Ascending aorta (tissue), 2 donors: ENCODE measurements at regions of chr13 and their contacts with region 1.

Region 1: GRCh38 chr13:97109841-97110492 is 112.2 kb upstream of the MBNL2 start:
- DNase-seq: peak; percentile 66 to 96
- H3K4me3 ChIP-seq: peak overlapping the region in 1 of 2 donors; percentile 42
- H3K27ac ChIP-seq: peak overlapping the region; percentile 63 to 69
- H3K4me1 ChIP-seq: peaks cover 8 to 70% of the 10 kb centered on the region in 2 donors
- H3K27me3 ChIP-seq: no peaks in the 10 kb centered on the region
- CTCF ChIP-seq: peak; percentile 95 to 97 (median 96)

Region 2: GRCh38 chr13:96053011-96053703 is 1056.8 kb before region 1 on chr13 and contains the start of gene UGGT2:
- intact Hi-C with region 1: loop called (anchors 10 kb)
- DNase-seq: peak; percentile 77 to 96
- H3K4me3 ChIP-seq: peak within 1 kb of the TSS; percentile 73 to 89
- H3K27ac ChIP-seq: peak within 1 kb of the TSS; percentile 81 to 94
- H3K4me1 ChIP-seq: no peaks in the 10 kb centered on the region
- H3K27me3 ChIP-seq: no peaks in the 10 kb centered on the region
- CTCF ChIP-seq: no peak
- total RNA-seq, gene UGGT2: 26.0 TPM

Region 3: GRCh38 chr13:97275265-97275664 is 165.3 kb after region 1 on chr13:
- intact Hi-C with region 1: loop called (anchors 5 kb)
- DNase-seq: no peak
- H3K4me3 ChIP-seq: no peak overlapping the region
- H3K27ac ChIP-seq: peak overlapping the region; percentile 78 to 84
- H3K4me1 ChIP-seq: peaks cover 23 to 46% of the 10 kb centered on the region in 2 donors
- H3K27me3 ChIP-seq: no peaks in the 10 kb centered on the region
- CTCF ChIP-seq: no peak

Region 4: DNA sequence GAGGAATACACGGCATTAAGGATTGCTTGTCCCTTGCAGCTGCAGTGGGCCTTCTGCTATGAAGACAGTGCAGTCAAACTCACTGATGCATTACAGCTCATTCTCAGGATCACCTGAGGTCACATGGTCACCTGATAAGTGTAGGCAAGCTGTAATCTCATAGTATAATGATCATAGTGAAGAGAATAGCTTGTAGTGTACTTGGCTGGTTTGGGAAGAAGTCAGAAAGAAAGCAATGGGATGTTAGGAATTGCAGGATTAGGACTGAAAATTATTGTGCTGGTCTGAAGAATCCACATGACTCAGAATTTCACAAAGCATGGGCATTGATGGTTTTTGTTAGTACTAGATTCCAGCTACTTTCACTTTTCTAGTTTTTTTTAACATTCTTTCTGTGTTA is 188.8 kb after region 1 on chr13:
- intact Hi-C with region 1: no loop called
- DNase-seq: no peak
- H3K4me3 ChIP-seq: no peak overlapping the region
- H3K27ac ChIP-seq: no peak overlapping the region
- H3K4me1 ChIP-seq: peaks cover 0 to 15% of the 10 kb centered on the region in 2 donors
- H3K27me3 ChIP-seq: no peaks in the 10 kb centered on the region
- CTCF ChIP-seq: no peak

Region 5: GRCh38 chr13:97344265-97345175 is 234.6 kb after region 1 on chr13:
- intact Hi-C with region 1: loop called (anchors 1 kb)
- DNase-seq: no peak
- H3K4me3 ChIP-seq: no peak overlapping the region
- H3K27ac ChIP-seq: no peak overlapping the region
- H3K4me1 ChIP-seq: peaks cover 0 to 8% of the 10 kb centered on the region in 2 donors
- H3K27me3 ChIP-seq: no peaks in the 10 kb centered on the region
- CTCF ChIP-seq: peak; percentile 50 to 76 (median 65)

Region 6: DNA sequence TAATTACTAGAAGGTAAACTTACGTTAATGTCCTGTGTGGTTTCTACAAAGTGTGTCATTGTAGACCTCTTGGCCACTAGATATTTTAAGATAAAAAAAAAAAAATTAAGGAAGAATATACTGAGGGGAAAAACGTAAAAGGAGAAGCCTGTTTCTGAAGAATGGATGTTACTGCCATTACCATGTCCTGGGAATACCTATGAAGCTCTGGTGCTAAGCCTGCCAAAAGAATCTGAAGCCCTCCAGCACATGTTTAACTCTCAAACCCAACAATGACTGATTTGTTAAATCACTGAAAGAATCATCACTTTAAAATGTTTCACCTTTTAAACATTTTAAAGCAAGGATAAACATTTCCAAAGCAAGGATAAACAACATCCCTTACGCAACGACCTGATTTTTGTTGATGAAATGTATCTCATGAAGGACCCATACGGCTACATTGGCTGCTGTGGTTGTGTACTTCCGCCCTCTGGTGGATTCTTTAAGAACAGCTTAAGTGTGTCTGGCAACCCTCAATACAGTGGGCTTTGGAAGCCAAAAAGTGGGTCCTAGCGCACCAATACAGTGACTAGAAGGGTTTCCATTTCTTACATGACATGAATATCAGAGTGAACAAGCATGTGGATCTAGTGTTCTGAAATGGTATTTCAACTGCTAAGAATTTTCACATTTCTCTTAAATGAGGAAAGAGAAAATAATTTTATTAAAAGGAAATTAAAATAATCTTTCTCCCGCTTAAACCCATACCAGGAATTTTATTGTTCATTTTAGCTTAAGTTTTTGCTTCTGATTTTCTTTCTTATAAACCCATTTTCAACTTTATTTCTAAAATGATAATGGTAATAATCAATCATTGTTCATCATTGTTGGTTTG is 249.5 kb after region 1 on chr13:
- intact Hi-C with region 1: loop called (anchors 1 kb)
- DNase-seq: no peak
- H3K4me3 ChIP-seq: no peak overlapping the region
- H3K27ac ChIP-seq: no peak overlapping the region
- H3K4me1 ChIP-seq: peaks cover 0 to 18% of the 10 kb centered on the region in 2 donors
- H3K27me3 ChIP-seq: no peaks in the 10 kb centered on the region
- CTCF ChIP-seq: peak; percentile 70 to 90 (median 85)

Region 7: GRCh38 chr13:97411984-97412383 is 302.0 kb after region 1 on chr13:
- intact Hi-C with region 1: no loop called
- DNase-seq: no peak
- H3K4me3 ChIP-seq: no peak overlapping the region
- H3K27ac ChIP-seq: no peak overlapping the region
- H3K4me1 ChIP-seq: no peaks in the 10 kb centered on the region
- H3K27me3 ChIP-seq: no peaks in the 10 kb centered on the region
- CTCF ChIP-seq: no peak

Region 8: DNA sequence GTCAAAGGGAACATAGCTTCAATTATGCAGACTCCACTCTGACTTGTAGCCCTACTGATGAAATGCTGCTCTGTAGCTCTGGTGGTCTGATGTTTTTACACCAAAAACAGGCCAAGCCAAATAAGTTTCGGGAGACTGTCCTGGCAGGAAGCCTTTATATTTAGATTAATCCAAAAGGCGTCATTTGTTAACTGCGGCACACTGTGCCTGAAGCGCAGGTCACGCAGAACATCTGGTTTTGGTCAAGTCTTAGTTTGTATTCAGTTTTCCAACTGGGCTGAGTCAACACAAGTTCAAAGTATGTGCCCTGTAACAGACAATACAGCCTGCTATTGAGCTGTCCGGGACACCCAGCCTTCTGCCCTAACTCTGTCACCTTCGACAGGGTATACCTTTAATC is 688.9 kb after region 1 on chr13:
- intact Hi-C with region 1: loop called (anchors 5 kb)
- DNase-seq: no peak
- H3K4me3 ChIP-seq: peak overlapping the region in 1 of 2 donors; percentile 6
- H3K27ac ChIP-seq: peak overlapping the region in 1 of 2 donors; percentile 21
- H3K4me1 ChIP-seq: peaks cover 0 to 4% of the 10 kb centered on the region in 2 donors
- H3K27me3 ChIP-seq: no peaks in the 10 kb centered on the region
- CTCF ChIP-seq: no peak